Right cardiac atrium (tissue), 5 donors: ENCODE measurements at regions of chr9 and their contacts with region 1.

Region 1: GRCh38 chr9:105425841-105426436 is 21.9 kb upstream of the FSD1L start:
- DNase-seq: no peak
- ATAC-seq: no peak
- H3K4me3 ChIP-seq: no peak overlapping the region
- H3K27ac ChIP-seq: no peak overlapping the region
- H3K4me1 ChIP-seq: no peaks in the 10 kb centered on the region
- H3K27me3 ChIP-seq: no peaks in the 10 kb centered on the region

Region 2: GRCh38 chr9:105483618-105484017 is 57.7 kb after region 1 on chr9:
- intact Hi-C with region 1: loop called in 1 of 4 experiments (anchors 10 kb)
- DNase-seq: no peak
- ATAC-seq: no peak
- H3K4me3 ChIP-seq: no peak overlapping the region
- H3K27ac ChIP-seq: no peak overlapping the region
- H3K4me1 ChIP-seq: no peaks in the 10 kb centered on the region
- H3K27me3 ChIP-seq: no peaks in the 10 kb centered on the region